ENCODE measurements at regions of chr17 and their contacts with region 1.

Region 1: DNA sequence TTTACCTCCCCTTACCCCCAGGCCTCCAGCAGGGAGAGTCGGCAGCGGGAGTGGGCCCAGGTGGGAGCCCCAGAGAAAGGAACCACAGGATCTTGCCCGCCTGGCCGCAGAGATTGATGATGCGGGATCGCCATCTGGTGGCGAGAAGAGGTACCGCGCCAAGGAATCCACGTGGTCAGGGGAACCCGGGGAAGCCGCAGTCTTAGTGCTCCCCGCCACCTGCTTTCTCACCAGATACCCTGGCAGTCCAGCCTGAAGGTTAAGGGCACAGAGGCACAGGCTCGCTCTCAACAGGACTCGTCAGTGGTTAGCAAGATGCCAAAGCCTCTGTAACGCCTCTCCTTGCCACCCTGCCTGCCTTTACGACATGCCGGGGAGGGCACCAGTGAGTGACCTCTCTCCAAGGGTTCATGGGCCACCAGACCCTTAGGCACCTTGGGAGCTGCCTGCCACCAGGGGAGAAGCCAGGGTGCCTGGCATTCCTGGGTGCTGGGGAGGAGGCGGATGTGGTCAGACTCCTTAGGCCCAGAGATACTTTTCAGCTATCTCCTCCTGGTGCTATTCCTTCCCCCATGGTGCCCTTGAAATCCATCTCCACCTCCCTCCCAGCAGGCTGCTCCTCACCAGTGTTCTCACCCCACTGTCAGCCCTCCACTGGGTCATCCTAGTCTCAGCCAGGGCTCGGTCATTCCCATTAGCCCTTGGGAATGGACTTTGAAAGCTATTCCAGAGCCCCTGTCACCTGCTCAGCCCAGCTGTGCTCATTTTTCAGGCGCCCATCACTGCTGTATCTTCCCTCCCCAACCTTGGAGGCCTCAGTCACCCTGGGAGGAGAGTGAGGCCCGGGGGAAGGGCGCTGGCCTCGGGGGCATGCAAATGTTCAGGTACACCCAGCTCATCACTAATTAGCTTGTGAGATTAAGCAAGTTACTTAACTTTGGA is 5.5 kb upstream of the RHBDF2 start:
- DNase-seq: peak; percentile 90
- H3K4me3 ChIP-seq: no peak overlapping the region
- H3K27ac ChIP-seq: no peak overlapping the region
- H3K4me1 ChIP-seq: peaks cover 5% of the 10 kb centered on the region
- H3K27me3 ChIP-seq: no peaks in the 10 kb centered on the region
- CTCF ChIP-seq: peak; percentile 89

Region 2: DNA sequence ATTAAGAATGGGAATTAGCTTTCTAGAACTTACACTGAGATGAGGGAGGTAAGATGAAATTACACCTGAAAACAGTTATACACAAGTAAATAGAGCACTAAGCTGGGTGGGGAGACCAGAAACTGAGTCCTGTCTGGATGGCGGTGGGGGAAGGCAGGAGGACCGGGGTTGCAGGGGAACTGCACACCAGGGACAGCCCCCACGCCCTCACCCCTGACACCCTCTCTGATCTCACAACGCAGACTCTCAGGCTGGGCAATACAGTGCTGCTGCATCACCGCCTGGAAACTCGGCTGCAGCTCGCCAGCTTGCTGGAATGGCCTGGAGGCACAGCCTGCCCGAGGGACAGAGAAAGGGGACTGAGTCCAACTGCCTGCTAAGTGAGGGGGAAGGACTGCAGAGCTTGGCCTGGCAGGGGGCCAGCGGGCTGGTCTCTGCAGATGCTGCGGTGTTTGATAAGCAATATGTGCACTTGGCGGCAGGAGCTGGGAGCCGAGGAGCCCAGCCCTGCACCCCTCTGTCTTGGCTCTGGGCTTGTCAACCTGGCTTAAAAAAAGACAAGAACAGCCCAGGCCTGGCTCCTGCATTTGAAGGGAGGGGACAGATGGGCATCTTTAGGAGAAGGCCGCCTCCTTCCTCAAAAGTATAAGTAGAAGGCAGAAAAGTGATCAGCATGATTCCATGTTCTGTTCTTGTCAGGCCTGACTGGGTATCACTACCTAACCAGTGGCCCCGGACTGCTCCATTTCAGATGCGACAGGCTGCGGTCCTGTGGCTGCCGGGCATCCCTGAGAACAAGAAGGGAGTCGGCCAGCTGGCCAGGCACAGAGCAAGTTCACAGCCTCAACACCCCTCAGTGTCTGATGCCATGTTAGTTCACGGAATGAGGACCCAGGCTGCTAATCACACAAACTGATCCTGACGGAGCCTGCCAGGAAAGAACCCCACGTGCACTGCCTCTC is 92.1 kb before region 1 on chr17:
- intact Hi-C with region 1: loop called (anchors 5 kb)
- DNase-seq: no peak
- H3K4me3 ChIP-seq: no peak overlapping the region
- H3K27ac ChIP-seq: no peak overlapping the region
- H3K4me1 ChIP-seq: no peaks in the 10 kb centered on the region
- H3K27me3 ChIP-seq: no peaks in the 10 kb centered on the region
- CTCF ChIP-seq: no peak

Region 3: GRCh38 chr17:76467366-76467765 is 39.3 kb before region 1 on chr17 and contains the start of gene AANAT:
- intact Hi-C with region 1: loop called (anchors 2 kb)
- DNase-seq: no peak
- H3K4me3 ChIP-seq: no peak within 1 kb of the TSS
- H3K27ac ChIP-seq: no peak within 1 kb of the TSS
- H3K4me1 ChIP-seq: no peaks in the 10 kb centered on the region
- H3K27me3 ChIP-seq: no peaks in the 10 kb centered on the region
- CTCF ChIP-seq: no peak
- total RNA-seq, gene AANAT: not detected

Region 4: GRCh38 chr17:76477576-76477975 is 29.1 kb before region 1 on chr17:
- intact Hi-C with region 1: no loop called
- DNase-seq: no peak
- H3K4me3 ChIP-seq: no peak overlapping the region
- H3K27ac ChIP-seq: no peak overlapping the region
- H3K4me1 ChIP-seq: no peaks in the 10 kb centered on the region
- H3K27me3 ChIP-seq: no peaks in the 10 kb centered on the region
- CTCF ChIP-seq: no peak

Region 5: GRCh38 chr17:76601065-76601464 is 94.4 kb after region 1 on chr17:
- intact Hi-C with region 1: no loop called
- DNase-seq: no peak
- H3K4me3 ChIP-seq: no peak overlapping the region
- H3K27ac ChIP-seq: no peak overlapping the region
- H3K4me1 ChIP-seq: peaks cover 4% of the 10 kb centered on the region
- H3K27me3 ChIP-seq: no peaks in the 10 kb centered on the region
- CTCF ChIP-seq: no peak

Measured in colonic mucosa (tissue), 4 donors.